Thyroid gland (tissue), 4 donors: ENCODE measurements at regions of chr7 and their contacts with region 1.

Region 1: GRCh38 chr7:111735661-111736551 is 173.6 kb upstream of the IMMP2L start:
- DNase-seq: peak; percentile 27 to 41
- H3K4me3 ChIP-seq: no peak overlapping the region
- H3K27ac ChIP-seq: no peak overlapping the region
- H3K4me1 ChIP-seq: no peaks in the 10 kb centered on the region
- H3K27me3 ChIP-seq: no peaks in the 10 kb centered on the region
- CTCF ChIP-seq: peak; percentile 60 to 94 (median 77)
- POLR2A ChIP-seq: no peak

Region 2: GRCh38 chr7:109844362-109844761 is 1891.5 kb before region 1 on chr7:
- intact Hi-C with region 1: loop called (anchors 10 kb)
- DNase-seq: peak; percentile 3 to 4
- H3K4me3 ChIP-seq: no peak overlapping the region
- H3K27ac ChIP-seq: no peak overlapping the region
- H3K4me1 ChIP-seq: no peaks in the 10 kb centered on the region
- H3K27me3 ChIP-seq: no peaks in the 10 kb centered on the region
- CTCF ChIP-seq: peak in 3 of 6 experiments; percentile 57 to 61 (median 57)
- POLR2A ChIP-seq: no peak

Region 3: DNA sequence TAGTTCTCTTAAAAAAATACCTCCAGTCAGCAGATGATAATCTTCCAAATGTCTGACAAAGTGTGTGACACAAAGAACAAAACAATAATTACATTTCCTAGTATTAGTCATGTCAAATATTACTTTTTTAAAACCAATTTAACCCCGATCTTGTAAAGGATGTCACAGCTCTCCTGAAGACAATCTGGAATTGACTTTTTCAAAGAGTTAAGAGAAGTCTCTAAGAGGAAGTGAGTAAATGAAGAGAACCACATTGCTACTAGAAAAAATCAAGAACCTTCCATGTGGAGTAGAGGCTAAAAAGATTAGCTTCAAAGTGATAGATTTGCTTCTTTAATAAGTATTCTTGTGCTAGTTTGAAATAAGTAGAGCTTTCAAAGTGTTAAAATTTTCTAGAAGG is 44.6 kb after region 1 on chr7:
- intact Hi-C with region 1: no loop called
- DNase-seq: no peak
- H3K4me3 ChIP-seq: no peak overlapping the region
- H3K27ac ChIP-seq: no peak overlapping the region
- H3K4me1 ChIP-seq: peaks cover 6 to 12% of the 10 kb centered on the region in 2 donors
- H3K27me3 ChIP-seq: no peaks in the 10 kb centered on the region
- CTCF ChIP-seq: no peak
- POLR2A ChIP-seq: no peak